CD8-positive, alpha-beta memory T cell (primary cell): ENCODE measurements at regions of chr18 and their contacts with region 1.

Region 1: DNA sequence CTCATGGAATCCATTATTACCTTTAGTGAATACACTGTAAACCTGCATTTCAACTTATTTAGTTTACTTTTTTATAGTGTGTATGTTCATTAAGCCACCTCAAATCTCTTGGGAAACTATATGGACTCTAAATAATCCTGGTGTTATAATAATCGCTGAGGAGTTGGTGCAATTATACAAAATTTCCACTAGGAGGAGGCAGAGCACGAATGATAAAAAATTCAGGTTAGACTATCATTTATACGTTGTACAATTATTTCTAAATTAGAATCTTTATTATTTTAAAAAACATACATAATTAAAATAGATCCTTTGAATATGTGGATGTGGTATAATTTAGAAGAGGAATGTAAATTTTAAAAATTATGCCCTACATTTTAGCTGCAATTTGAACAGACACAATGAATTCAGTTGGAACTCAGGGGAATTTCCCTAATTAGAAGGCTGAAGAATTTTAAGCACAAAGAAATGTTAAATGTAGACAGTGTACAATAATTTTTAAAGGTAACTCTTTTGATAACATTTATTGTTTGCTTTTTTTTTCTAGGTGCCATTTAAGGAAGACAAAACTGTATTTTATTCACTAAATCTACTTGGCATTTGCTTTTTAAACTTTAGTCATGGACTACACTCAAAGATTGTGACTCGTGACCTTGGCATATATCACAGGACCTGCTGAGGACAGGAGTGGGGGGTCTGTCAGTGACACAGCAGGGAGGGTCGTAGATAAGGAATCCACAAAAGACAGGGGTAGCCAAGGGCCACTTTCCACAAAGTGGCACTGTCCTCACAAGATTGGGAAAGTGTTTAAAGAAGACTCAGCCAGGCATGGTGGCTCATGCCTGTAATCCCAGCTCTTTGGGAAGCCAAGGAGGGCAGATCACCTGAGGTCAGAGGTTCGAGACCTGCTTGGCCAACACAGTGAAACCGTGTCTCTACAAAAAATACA is 45.5 kb downstream of the RAB12 start:
- DNase-seq: peak in 1 of 5 donors; percentile 13
- H3K4me3 ChIP-seq: no peak overlapping the region
- H3K4me3 Mint-ChIP-seq: no peak overlapping the region
- H3K27ac ChIP-seq: no peak overlapping the region
- H3K27ac Mint-ChIP-seq: no peak overlapping the region
- H3K4me1 ChIP-seq: no peaks in the 10 kb centered on the region
- H3K4me1 Mint-ChIP-seq: no peaks in the 10 kb centered on the region
- H3K27me3 ChIP-seq: no peaks in the 10 kb centered on the region
- H3K27me3 Mint-ChIP-seq: peaks cover 13 to 30% of the 10 kb centered on the region in 2 donors

Region 2: DNA sequence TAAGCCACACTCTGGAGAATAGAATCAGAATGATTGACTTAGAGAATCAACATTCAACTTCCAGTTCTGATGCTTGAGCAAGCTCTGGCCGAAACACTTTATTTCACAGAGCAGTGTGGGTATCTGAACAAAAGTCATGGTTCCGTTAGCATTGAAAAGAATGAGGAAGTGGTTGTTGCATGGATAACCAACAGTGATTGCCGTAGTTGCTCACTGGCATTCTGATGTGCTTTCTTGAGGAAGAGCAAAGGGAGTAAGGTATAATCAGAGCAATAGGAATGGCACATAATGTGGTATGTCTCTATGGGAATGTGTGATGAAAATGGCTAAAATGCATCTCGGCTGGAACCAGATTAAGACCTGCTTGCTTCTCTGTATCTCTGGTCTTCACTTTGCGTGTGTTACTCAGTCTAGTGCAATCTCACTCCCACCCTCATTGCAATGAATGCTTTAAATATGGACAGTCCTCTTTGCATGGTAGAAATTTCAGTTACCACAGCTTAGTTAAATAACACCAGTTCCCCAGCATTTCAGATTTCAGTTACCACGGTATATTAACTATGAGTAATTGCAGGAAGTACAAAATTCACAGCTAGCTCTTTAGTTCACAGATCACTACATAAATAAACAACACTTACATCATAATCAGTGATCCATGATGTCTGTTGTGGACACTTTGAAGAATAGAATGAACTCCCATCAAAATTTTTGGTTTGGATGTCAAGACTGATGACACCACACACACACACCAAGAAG is 53.3 kb before region 1 on chr18:
- CTCF ChIA-PET with region 1: no interaction called
- POLR2A ChIA-PET with region 1: no interaction called
- DNase-seq: no peak
- H3K4me3 ChIP-seq: no peak overlapping the region
- H3K4me3 Mint-ChIP-seq: peak overlapping the region in 1 of 7 donors; percentile 22
- H3K27ac ChIP-seq: no peak overlapping the region
- H3K27ac Mint-ChIP-seq: peak overlapping the region in 2 of 8 donors; percentile 10 to 51
- H3K4me1 ChIP-seq: no peaks in the 10 kb centered on the region
- H3K4me1 Mint-ChIP-seq: peaks cover 5 to 17% (median 6%) of the 10 kb centered on the region in 3 donors
- H3K27me3 ChIP-seq: peaks cover 1% of the 10 kb centered on the region
- H3K27me3 Mint-ChIP-seq: peaks cover 10 to 39% of the 10 kb centered on the region in 2 donors

Region 3: DNA sequence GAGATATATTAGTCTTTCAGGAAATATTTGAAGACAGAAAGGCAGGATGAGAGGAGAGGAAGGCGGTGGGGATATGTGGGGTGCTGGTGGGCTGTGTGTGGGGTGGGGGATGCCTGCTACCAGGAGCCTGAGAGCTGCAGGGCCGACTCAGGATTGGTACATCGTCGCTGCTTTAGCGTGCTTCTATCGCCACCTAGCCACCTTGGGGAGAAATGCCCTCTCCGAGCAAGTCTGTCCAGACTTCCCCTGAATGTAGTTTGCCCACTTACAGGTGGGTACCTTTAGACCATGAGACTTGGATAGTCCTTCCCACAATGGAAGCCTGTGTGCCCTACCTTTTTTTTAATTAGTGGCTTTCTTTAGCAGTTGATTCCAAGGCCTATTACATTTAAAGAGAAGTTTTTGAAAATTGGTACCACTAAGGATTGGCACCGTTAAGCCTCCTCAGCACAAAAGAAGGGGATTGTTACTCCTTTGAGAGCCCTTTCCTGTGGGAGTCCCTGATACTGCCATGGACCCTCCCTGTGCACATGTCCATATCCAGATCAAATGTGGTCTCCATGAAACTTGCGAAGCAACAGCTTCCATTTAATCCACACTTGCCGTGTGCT is 333.6 kb after region 1 on chr18:
- CTCF ChIA-PET with region 1: interaction called, 15 read pairs
- POLR2A ChIA-PET with region 1: no interaction called
- DNase-seq: peak; percentile 30 to 69 (median 43)
- H3K4me3 ChIP-seq: no peak overlapping the region
- H3K4me3 Mint-ChIP-seq: no peak overlapping the region
- H3K27ac ChIP-seq: no peak overlapping the region
- H3K27ac Mint-ChIP-seq: peak overlapping the region in 1 of 8 donors; percentile 74
- H3K4me1 ChIP-seq: no peaks in the 10 kb centered on the region
- H3K4me1 Mint-ChIP-seq: no peaks in the 10 kb centered on the region
- H3K27me3 ChIP-seq: no peaks in the 10 kb centered on the region
- H3K27me3 Mint-ChIP-seq: peaks cover 10 to 36% of the 10 kb centered on the region in 2 donors